ENCODE measurements at regions of chrX and their contacts with region 1.

Region 1: GRCh38 chrX:133045986-133046385 is 50.9 kb downstream of the USP26 start:
- DNase-seq: no peak
- H3K4me3 ChIP-seq: no peak overlapping the region
- H3K27ac ChIP-seq: no peak overlapping the region
- H3K4me1 ChIP-seq: no peaks in the 10 kb centered on the region
- H3K27me3 ChIP-seq: no peaks in the 10 kb centered on the region
- CTCF ChIP-seq: peak in 1 of 3 experiments; percentile 30

Region 2: DNA sequence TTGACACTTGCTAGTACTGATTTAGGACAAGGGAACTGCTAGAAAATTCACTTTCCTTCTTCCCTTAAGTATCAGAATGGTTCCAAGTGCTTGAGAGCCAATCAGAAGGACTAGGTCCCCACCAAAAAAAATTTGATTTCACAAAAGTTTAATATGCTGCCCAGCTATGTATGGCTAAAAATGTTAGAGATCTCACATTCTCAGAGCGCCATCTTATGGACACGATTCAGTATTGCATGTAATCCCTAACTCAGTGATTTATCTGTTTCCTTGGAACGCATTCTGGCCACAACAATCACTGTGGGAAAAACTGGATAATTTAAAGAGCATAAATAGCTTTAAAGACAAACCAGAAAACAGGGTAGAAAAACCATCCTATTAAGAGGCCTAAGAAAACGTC is 624.4 kb after region 1 on chrX:
- intact Hi-C with region 1: loop called (anchors 1 kb)
- DNase-seq: no peak
- H3K4me3 ChIP-seq: no peak overlapping the region
- H3K27ac ChIP-seq: no peak overlapping the region
- H3K4me1 ChIP-seq: no peaks in the 10 kb centered on the region
- H3K27me3 ChIP-seq: no peaks in the 10 kb centered on the region
- CTCF ChIP-seq: peak; percentile 51 to 76 (median 65)

Measured in ascending aorta (tissue), 2 donors.